Endothelial cell of umbilical vein (primary cell): ENCODE measurements at regions of chr16 and their contacts with region 1.

Region 1: DNA sequence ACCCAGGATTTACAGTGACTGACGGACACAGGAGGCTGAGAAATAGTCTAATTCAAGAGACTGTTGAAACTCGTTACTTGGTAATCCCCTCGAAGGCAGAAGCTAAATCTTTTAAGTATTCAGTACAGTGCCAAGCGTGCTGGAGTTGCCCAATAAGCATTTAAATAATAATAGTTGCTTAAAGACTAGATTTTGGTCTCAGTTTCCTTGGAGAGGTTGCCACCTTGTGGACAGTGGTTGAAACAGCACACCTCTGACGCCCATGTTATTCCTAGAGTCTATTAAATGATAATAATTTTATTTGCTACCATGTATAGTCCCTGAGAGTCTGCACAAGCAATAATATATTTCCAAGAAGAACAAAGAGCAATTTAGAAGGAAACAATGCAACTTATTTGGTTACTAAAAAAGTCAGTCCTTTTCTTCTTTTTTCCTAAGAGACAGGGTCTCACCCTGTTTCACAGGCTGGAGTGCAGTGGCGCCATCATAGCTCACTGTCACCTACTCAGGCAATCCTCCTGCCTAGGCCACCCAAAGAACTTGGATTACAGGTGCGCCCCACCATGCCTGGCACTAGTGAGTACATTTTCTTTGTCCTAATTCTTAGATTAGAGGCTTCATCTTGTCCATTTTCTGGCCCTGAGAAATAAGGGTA is 138.0 kb upstream of the NUDT7 start:
- DNase-seq: peak; percentile 89
- H3K4me3 ChIP-seq: no peak overlapping the region
- H3K27ac ChIP-seq: peak overlapping the region; percentile 99
- H3K4me1 ChIP-seq: peaks cover 57% of the 10 kb centered on the region
- H3K27me3 ChIP-seq: no peaks in the 10 kb centered on the region
- CTCF ChIP-seq: peak; percentile 69 to 73
- POLR2A ChIP-seq: no peak

Region 2: DNA sequence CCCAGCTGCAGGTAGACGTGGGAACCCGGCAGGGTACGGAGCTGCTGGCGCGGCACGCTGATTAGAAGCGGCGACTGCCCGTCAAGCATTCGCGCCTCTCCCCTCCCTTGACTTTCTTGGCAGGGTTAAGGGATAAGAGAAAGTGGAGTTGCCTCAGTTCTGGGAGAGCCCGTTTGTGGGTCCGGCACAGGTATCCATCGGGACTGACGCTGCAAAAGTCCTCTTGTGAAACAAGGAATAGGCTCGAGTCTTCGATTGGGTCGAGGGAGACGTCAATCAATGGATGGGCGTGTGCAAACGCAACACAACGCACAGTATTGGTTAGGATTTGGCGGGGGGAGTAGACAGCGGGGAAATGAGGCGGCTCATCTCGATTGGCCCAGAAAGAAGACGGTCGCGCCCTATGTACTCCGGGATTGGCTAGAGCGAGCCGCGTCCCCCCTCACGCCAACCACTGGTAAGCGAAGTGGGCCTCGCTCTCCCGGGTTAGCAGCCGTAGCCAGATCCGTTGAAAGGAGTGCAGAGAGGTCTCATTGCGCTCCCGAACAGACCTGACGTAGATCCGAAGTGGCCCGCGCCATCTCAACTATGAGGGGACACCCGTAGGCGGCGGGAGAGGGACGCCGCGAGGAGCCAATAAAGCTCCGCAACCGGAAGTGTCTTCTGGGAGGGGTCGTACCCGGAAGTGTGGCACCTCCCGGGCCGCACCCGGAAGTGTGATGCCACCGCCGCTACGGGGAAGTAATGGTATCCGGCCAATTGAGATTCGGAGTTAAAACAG is 393.7 kb before region 1 on chr16 and contains the start of gene MON1B:
- CTCF ChIA-PET with region 1: no interaction called
- POLR2A ChIA-PET with region 1: no interaction called
- dilution Hi-C with region 1: no loop called
- intact Hi-C with region 1: loop called (anchors 1 kb)
- DNase-seq: peak; percentile 99
- H3K4me3 ChIP-seq: peak within 1 kb of the TSS; percentile 66 to 91 (median 70)
- H3K27ac ChIP-seq: peak within 1 kb of the TSS; percentile 82
- H3K4me1 ChIP-seq: peaks cover 12% of the 10 kb centered on the region
- H3K27me3 ChIP-seq: peaks cover 2% of the 10 kb centered on the region in 2 experiments
- CTCF ChIP-seq: no peak
- POLR2A ChIP-seq: peak; percentile 74
- total RNA-seq, gene MON1B: 50.1 and 57.0 TPM in 2 replicates

Region 3: DNA sequence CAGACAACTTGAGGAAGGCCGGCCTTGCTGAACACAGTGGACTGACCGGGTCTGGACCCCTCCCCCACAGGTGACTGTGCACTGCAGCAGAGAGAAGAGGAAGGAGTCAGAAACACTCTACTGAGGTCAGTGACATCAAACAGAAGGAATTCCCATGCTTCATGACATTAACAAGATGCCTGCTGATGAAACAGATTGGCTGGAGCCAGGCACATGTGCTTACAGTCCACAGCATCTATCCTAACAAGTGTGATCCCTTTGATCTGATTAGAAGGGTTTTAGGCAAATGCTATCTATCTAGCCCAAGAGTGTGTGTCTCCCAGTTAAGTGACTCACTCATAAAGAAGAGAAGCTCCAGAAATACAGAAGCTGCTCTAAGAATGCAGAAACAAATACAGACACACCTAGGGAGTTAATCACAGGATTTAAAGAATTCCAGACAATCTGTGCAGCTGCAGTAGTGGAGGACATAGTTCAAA is 295.0 kb before region 1 on chr16:
- CTCF ChIA-PET with region 1: interaction called, 6 read pairs
- POLR2A ChIA-PET with region 1: interaction called, 3 read pairs
- dilution Hi-C with region 1: no loop called
- intact Hi-C with region 1: loop called (anchors 2 kb)
- DNase-seq: peak; percentile 65
- H3K4me3 ChIP-seq: no peak overlapping the region
- H3K27ac ChIP-seq: peak overlapping the region; percentile 64
- H3K4me1 ChIP-seq: peaks cover 31% of the 10 kb centered on the region
- H3K27me3 ChIP-seq: no peaks in the 10 kb centered on the region
- CTCF ChIP-seq: no peak
- POLR2A ChIP-seq: no peak

Region 4: DNA sequence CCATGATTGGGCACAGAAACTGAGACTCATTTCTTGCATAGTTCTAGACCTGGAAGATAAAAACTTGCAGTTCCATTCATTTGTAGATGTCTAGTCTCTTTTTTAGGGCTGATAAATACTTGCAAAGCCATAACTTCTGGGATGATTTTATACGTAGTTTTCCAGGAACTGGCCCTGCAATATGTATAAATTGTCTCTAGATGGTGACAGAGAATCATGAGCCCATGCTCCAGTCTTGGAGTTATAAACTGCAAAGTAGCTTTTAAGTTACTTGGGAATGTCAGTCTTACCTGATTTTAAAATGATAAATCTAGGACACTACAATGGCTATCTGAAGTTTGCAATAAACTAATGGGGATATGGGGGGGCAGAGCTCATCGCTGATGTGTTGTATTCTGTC is 146.5 kb before region 1 on chr16:
- CTCF ChIA-PET with region 1: interaction called, 366 read pairs
- POLR2A ChIA-PET with region 1: interaction called, 13 read pairs
- dilution Hi-C with region 1: no loop called
- intact Hi-C with region 1: loop called (anchors 1 kb)
- DNase-seq: peak; percentile 73
- H3K4me3 ChIP-seq: no peak overlapping the region
- H3K27ac ChIP-seq: no peak overlapping the region
- H3K4me1 ChIP-seq: peaks cover 24% of the 10 kb centered on the region
- H3K27me3 ChIP-seq: peaks cover 0 to 3% of the 10 kb centered on the region in 2 experiments
- CTCF ChIP-seq: peak; percentile 27 to 49
- POLR2A ChIP-seq: no peak

Region 5: DNA sequence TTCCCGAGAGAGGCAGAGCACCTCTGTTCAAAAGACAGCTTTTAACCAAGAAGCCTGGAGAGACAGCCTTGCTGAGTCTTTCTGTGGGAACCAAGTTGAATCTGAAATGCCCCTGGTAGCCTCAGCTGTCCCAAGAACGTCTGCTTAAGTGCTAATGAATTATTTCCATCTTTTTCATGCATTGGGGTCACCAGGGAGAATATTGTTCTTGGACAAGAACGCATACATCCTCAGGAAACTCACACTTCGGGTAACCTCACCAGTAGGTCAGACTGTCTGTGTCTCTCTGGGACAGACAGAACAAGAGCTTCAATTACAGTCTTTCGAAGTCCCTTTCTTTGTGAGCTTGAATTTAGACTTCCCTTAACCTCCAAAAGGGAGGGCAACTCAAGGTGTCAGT is 14.9 kb before region 1 on chr16:
- CTCF ChIA-PET with region 1: interaction called, 29 read pairs
- POLR2A ChIA-PET with region 1: no interaction called
- dilution Hi-C with region 1: no loop called
- intact Hi-C with region 1: no loop called
- DNase-seq: peak; percentile 85
- H3K4me3 ChIP-seq: no peak overlapping the region
- H3K27ac ChIP-seq: peak overlapping the region; percentile 83
- H3K4me1 ChIP-seq: peaks cover 49% of the 10 kb centered on the region
- H3K27me3 ChIP-seq: no peaks in the 10 kb centered on the region
- CTCF ChIP-seq: no peak
- POLR2A ChIP-seq: no peak

Region 6: GRCh38 chr16:77660311-77660710 is 76.0 kb after region 1 on chr16:
- CTCF ChIA-PET with region 1: interaction called, 114 read pairs
- POLR2A ChIA-PET with region 1: interaction called, 7 read pairs
- dilution Hi-C with region 1: no loop called
- intact Hi-C with region 1: loop called (anchors 1 kb)
- DNase-seq: peak; percentile 81
- H3K4me3 ChIP-seq: no peak overlapping the region
- H3K27ac ChIP-seq: peak overlapping the region; percentile 40
- H3K4me1 ChIP-seq: peaks cover 10% of the 10 kb centered on the region
- H3K27me3 ChIP-seq: no peaks in the 10 kb centered on the region
- CTCF ChIP-seq: peak; percentile 65 to 68
- POLR2A ChIP-seq: no peak

Region 7: GRCh38 chr16:78002915-78003538 is 418.7 kb after region 1 on chr16:
- CTCF ChIA-PET with region 1: interaction called, 34 read pairs
- POLR2A ChIA-PET with region 1: no interaction called
- dilution Hi-C with region 1: no loop called
- intact Hi-C with region 1: loop called (anchors 1 kb)
- DNase-seq: peak; percentile 88
- H3K4me3 ChIP-seq: no peak overlapping the region
- H3K27ac ChIP-seq: no peak overlapping the region
- H3K4me1 ChIP-seq: no peaks in the 10 kb centered on the region
- H3K27me3 ChIP-seq: no peaks in the 10 kb centered on the region
- CTCF ChIP-seq: peak; percentile 87 to 88
- POLR2A ChIP-seq: no peak